ENCODE measurements at regions of chr2 and their contacts with region 1.

Region 1: GRCh38 chr2:173965329-173966025 is at the start of gene SP3:
- DNase-seq: peak; percentile 88 to 97 (median 94)
- ATAC-seq: peak; percentile 75
- H3K4me3 ChIP-seq: peak within 1 kb of the TSS; percentile 88
- H3K4me3 Mint-ChIP-seq: peak within 1 kb of the TSS; percentile 91 to 99 (median 96)
- H3K27ac ChIP-seq: peak within 1 kb of the TSS; percentile 96
- H3K27ac Mint-ChIP-seq: peak within 1 kb of the TSS; percentile 97 to 100 (median 99)
- H3K4me1 ChIP-seq: peaks cover 13 to 25% of the 10 kb centered on the region in 2 donors
- H3K4me1 Mint-ChIP-seq: peaks cover 22 to 38% (median 31%) of the 10 kb centered on the region in 7 donors
- H3K27me3 ChIP-seq: no peaks in the 10 kb centered on the region
- H3K27me3 Mint-ChIP-seq: peaks cover 0 to 2% (median 0%) of the 10 kb centered on the region in 5 donors
- total RNA-seq, gene SP3: 108 to 158 (median 131) TPM

Region 2: DNA sequence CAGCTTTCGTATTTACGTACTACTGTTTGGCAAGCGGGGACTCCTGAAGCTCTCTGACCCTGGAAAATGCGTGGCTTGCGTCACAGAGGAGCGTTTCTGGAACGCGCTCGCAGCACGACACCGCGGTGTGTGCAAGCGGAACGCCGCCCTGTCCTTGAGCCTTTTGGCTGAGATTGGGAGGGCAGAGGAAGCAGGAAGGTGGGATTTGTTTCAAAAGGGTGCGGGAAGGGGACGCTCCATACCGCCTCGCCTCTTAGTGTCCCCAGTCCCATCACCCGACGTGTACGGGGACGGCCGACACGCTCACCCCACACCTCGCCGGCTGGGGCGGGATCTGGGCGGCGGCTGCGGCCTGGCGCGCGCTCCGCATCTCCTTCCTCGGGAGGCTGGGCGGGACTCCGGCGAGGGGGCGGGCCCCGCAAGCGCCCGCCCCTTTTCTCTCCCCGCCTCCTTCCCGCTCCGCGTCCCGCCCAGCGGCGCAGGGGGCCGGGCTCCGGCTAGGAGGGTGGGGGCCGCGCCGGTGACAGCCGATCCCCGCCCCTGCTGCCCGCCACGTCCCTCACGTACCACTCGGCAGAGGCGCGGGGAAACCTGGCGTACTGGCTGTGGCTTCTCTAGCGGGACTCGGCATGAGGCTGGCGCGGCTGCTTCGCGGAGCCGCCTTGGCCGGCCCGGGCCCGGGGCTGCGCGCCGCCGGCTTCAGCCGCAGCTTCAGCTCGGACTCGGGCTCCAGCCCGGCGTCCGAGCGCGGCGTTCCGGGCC is 1409.8 kb before region 1 on chr2 and contains the start of gene PDK1:
- CTCF ChIA-PET with region 1: no interaction called
- POLR2A ChIA-PET with region 1: no interaction called
- intact Hi-C with region 1: loop called (anchors 2 to 5 kb)
- DNase-seq: peak; percentile 89 to 95 (median 94)
- ATAC-seq: peak; percentile 97
- H3K4me3 ChIP-seq: peak within 1 kb of the TSS; percentile 84
- H3K4me3 Mint-ChIP-seq: peak within 1 kb of the TSS; percentile 88 to 99 (median 93)
- H3K27ac ChIP-seq: peak within 1 kb of the TSS; percentile 98
- H3K27ac Mint-ChIP-seq: peak within 1 kb of the TSS; percentile 86 to 97 (median 95)
- H3K4me1 ChIP-seq: peaks cover 10 to 29% of the 10 kb centered on the region in 2 donors
- H3K4me1 Mint-ChIP-seq: peaks cover 37 to 72% (median 64%) of the 10 kb centered on the region in 7 donors
- H3K27me3 ChIP-seq: no peaks in the 10 kb centered on the region
- H3K27me3 Mint-ChIP-seq: peaks cover 0 to 5% (median 0%) of the 10 kb centered on the region in 5 donors
- total RNA-seq, gene PDK1: 56.0 to 70.6 (median 66.6) TPM

Region 3: GRCh38 chr2:173948842-173949241 is 16.6 kb before region 1 on chr2:
- CTCF ChIA-PET with region 1: interaction called, 5 read pairs
- POLR2A ChIA-PET with region 1: interaction called, 3 read pairs
- intact Hi-C with region 1: loop called in 1 of 2 experiments (anchors 1 kb)
- DNase-seq: no peak
- ATAC-seq: no peak
- H3K4me3 ChIP-seq: no peak overlapping the region
- H3K4me3 Mint-ChIP-seq: peak overlapping the region in 9 of 10 donors; percentile 18 to 91 (median 48)
- H3K27ac ChIP-seq: no peak overlapping the region
- H3K27ac Mint-ChIP-seq: no peak overlapping the region
- H3K4me1 ChIP-seq: peaks cover 32 to 74% of the 10 kb centered on the region in 2 donors
- H3K4me1 Mint-ChIP-seq: peaks cover 52 to 94% (median 83%) of the 10 kb centered on the region in 7 donors
- H3K27me3 ChIP-seq: no peaks in the 10 kb centered on the region
- H3K27me3 Mint-ChIP-seq: no peaks in the 10 kb centered on the region

Region 4: GRCh38 chr2:174039551-174040416 is 74.3 kb after region 1 on chr2:
- CTCF ChIA-PET with region 1: no interaction called
- POLR2A ChIA-PET with region 1: interaction called, 6 read pairs
- intact Hi-C with region 1: loop called (anchors 1 kb)
- DNase-seq: peak; percentile 55 to 86 (median 77)
- ATAC-seq: peak; percentile 91
- H3K4me3 ChIP-seq: peak overlapping the region; percentile 41
- H3K4me3 Mint-ChIP-seq: peak overlapping the region; percentile 32 to 81 (median 68)
- H3K27ac ChIP-seq: peak overlapping the region; percentile 82
- H3K27ac Mint-ChIP-seq: peak overlapping the region; percentile 44 to 91 (median 89)
- H3K4me1 ChIP-seq: peaks cover 0 to 5% of the 10 kb centered on the region in 2 donors
- H3K4me1 Mint-ChIP-seq: peaks cover 8 to 20% (median 11%) of the 10 kb centered on the region in 7 donors
- H3K27me3 ChIP-seq: no peaks in the 10 kb centered on the region
- H3K27me3 Mint-ChIP-seq: peaks cover 0 to 12% (median 0%) of the 10 kb centered on the region in 5 donors

Region 5: GRCh38 chr2:174487108-174487819 is 521.8 kb after region 1 on chr2:
- CTCF ChIA-PET with region 1: no interaction called
- POLR2A ChIA-PET with region 1: no interaction called
- intact Hi-C with region 1: loop called (anchors 1 to 2 kb)
- DNase-seq: peak; percentile 66 to 93 (median 78)
- ATAC-seq: peak; percentile 89
- H3K4me3 ChIP-seq: peak overlapping the region; percentile 90
- H3K4me3 Mint-ChIP-seq: peak overlapping the region; percentile 92 to 100 (median 98)
- H3K27ac ChIP-seq: peak overlapping the region; percentile 87
- H3K27ac Mint-ChIP-seq: peak overlapping the region; percentile 88 to 100 (median 96)
- H3K4me1 ChIP-seq: peaks cover 31 to 38% of the 10 kb centered on the region in 2 donors
- H3K4me1 Mint-ChIP-seq: peaks cover 37 to 83% (median 77%) of the 10 kb centered on the region in 7 donors
- H3K27me3 ChIP-seq: no peaks in the 10 kb centered on the region
- H3K27me3 Mint-ChIP-seq: no peaks in the 10 kb centered on the region

Region 6: GRCh38 chr2:175167792-175168563 is 1202.5 kb after region 1 on chr2 and contains the start of gene ATF2:
- CTCF ChIA-PET with region 1: no interaction called
- POLR2A ChIA-PET with region 1: no interaction called
- intact Hi-C with region 1: loop called (anchors 1 to 2 kb)
- DNase-seq: peak; percentile 87 to 100 (median 98)
- ATAC-seq: peak; percentile 95
- H3K4me3 ChIP-seq: peak within 1 kb of the TSS; percentile 91
- H3K4me3 Mint-ChIP-seq: peak within 1 kb of the TSS; percentile 93 to 100 (median 98)
- H3K27ac ChIP-seq: peak within 1 kb of the TSS; percentile 91
- H3K27ac Mint-ChIP-seq: peak within 1 kb of the TSS; percentile 94 to 100 (median 99)
- H3K4me1 ChIP-seq: peaks cover 13 to 20% of the 10 kb centered on the region in 2 donors
- H3K4me1 Mint-ChIP-seq: peaks cover 21 to 75% (median 55%) of the 10 kb centered on the region in 7 donors
- H3K27me3 ChIP-seq: no peaks in the 10 kb centered on the region
- H3K27me3 Mint-ChIP-seq: no peaks in the 10 kb centered on the region
- total RNA-seq, gene ATF2: 40.5 to 67.2 (median 58.7) TPM